K562 (cell line): ENCODE measurements at regions of chr1 and their contacts with region 1.

Region 1: DNA sequence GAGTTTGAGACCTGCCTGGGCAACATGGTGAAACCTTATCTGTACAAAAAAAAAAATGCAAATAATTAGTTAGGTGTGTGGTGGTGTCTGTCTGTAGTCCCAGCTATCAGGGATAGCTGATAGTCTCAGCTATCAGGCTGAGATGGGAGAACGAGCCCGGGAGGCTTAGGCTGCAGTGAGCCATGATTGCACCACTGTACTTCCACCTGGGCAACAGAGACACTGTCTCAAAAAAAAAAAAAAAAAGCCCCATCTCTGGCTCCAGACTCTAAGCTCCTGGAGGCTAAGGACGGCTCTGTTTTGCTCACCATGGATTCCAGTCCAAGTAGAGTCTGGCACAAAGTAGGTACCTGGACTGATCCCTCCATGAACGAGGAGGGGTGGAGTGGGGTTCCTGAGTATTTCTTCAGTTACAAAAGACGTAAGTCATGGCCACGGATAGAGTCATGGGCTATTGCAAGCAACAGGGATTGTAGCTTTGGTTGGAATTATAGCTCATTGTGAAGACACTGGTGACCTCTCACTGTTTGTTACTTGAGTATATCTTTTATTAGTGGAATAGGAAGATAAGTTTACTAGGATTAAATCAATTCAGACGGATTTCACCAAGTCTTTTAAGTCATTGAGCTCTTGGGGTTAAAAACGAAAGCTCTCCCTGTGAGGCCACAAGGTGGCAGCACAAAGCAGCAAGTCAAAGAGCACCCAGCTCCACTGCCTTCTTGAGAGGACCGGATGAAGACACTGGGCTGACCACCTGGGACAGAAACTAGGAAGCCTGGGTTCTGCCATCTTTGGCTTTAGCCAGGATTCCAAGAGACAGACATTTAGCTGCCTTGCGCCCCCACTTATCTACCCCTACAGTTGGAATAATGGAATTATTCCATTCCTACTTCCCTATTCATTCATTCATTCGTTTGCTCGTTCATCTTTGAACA is 35.6 kb upstream of the TMEM61 start:
- DNase-seq: peak; percentile 77 to 83 (median 78)
- ATAC-seq: peak; percentile 94
- H3K4me3 ChIP-seq: no peak overlapping the region
- H3K27ac ChIP-seq: no peak overlapping the region
- H3K4me1 ChIP-seq: no peaks in the 10 kb centered on the region; a peak in 1 of 5 replicates
- H3K27me3 ChIP-seq: peaks cover 3 to 18% of the 10 kb centered on the region in 2 experiments; a peak in 3 of 5 replicates
- CTCF ChIP-seq: peak; percentile 74 to 86 (median 75)
- EP300 ChIP-seq: no peak
- POLR2A ChIP-seq: no peak
- RAD21 ChIP-seq: peak; percentile 73 to 86

Region 2: DNA sequence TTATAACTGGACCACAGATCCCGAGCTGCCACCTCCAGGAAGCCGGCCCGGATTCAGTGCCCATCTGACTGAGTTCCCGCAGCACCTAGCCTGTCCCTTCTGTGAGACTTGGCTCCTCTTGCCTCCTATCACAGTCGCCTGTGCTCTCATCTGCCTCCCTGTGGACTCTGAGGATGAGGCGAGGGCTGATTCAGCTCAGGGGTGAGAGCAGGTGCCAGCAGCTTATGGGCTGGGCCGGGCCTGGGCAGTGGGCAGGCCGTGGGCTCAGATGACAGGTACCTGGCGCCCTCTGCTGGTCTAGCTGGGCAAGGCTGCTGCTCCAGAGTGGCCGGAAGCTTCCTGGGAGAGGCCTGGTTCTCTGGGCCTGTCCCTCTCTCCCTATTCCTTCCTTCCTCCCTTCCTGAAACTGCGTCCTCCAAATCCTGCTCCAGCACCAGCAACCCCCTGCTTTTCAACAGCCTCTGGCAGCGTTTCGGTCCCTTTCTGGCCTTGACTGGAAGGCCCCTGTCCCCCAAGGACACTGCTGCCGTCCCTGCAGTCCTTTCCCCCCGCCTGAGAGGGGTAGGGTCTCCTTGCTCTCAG is 77.2 kb after region 1 on chr1:
- CTCF ChIA-PET with region 1: interaction called, 5 read pairs
- POLR2A ChIA-PET with region 1: interaction called, 3 read pairs
- in situ Hi-C with region 1: no loop called
- intact Hi-C with region 1: loop called (anchors 1 kb)
- DNase-seq: peak; percentile 84 to 92 (median 88)
- ATAC-seq: peak; percentile 100
- H3K4me3 ChIP-seq: no peak overlapping the region
- H3K27ac ChIP-seq: peak overlapping the region; percentile 54; the same call in 1 of the 3 replicates
- H3K4me1 ChIP-seq: peaks cover 3 to 11% of the 10 kb centered on the region in 2 experiments; a peak in 4 of 5 replicates
- H3K27me3 ChIP-seq: peaks cover 3 to 13% of the 10 kb centered on the region in 2 experiments; a peak in 3 of 5 replicates
- CTCF ChIP-seq: peak; percentile 86 to 91 (median 88)
- EP300 ChIP-seq: no peak
- POLR2A ChIP-seq: no peak
- RAD21 ChIP-seq: peak; percentile 69 to 87